CD4-positive, alpha-beta T cell (primary cell): ENCODE measurements at regions of chr18 and their contacts with region 1.

Region 1: DNA sequence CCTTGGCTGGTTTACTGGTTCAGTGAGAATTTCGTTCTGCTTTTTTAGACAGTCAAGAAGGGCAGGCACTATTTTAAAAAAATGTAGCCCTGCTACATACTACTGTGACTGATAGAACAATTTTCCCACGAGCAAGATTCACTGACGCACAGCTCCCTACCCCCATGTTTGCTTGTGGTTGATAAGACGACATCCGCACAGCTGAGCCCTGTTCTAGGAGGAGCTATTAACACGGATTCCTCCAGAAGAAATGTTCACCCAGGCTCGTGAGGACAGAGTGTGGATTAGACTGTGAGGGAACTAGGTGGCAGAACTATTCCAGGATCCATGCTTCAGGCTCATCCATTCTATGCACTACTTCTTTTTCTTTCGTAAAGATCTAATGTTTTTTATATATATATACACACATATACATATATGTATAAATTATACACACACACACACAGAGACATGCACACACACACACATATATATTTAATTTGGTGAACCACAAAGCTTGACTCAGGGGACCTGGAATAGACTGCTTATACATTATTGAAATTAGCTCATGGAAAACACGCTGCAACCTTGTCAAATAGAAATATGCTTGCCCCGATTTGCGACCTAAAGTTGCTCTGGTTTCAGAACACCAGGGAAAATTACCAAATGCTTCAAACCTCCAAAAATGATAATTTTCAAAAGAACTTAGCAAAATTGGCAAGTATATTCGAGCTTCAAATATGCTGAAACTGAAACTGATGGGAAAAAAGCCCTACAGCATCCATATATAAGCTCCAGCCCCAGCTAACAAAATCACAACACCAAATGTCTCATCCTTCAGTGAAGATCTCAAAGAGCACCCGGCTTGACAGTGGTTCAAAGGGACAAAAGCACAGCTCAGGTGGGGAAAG is 370.4 kb downstream of the SOCS6 start:
- DNase-seq: peak; percentile 35 to 89 (median 54)
- ATAC-seq: peak; percentile 95
- H3K4me3 ChIP-seq: no peak overlapping the region
- H3K4me3 Mint-ChIP-seq: peak overlapping the region; percentile 58
- H3K27ac ChIP-seq: peak overlapping the region; percentile 13 to 43
- H3K27ac Mint-ChIP-seq: peak overlapping the region; percentile 97
- H3K4me1 ChIP-seq: peaks cover 12% of the 10 kb centered on the region
- H3K4me1 Mint-ChIP-seq: peaks cover 59% of the 10 kb centered on the region
- H3K27me3 ChIP-seq: no peaks in the 10 kb centered on the region
- H3K27me3 Mint-ChIP-seq: no peaks in the 10 kb centered on the region
- CTCF ChIP-seq: no peak

Region 2: GRCh38 chr18:70491734-70492348 is 167.4 kb before region 1 on chr18:
- CTCF ChIA-PET with region 1: no interaction called
- POLR2A ChIA-PET with region 1: no interaction called
- intact Hi-C with region 1: loop called in 1 of 2 experiments (anchors 1 kb)
- DNase-seq: peak in 12 of 14 experiments; percentile 9 to 65 (median 38)
- ATAC-seq: peak; percentile 61
- H3K4me3 ChIP-seq: no peak overlapping the region
- H3K4me3 Mint-ChIP-seq: no peak overlapping the region
- H3K27ac ChIP-seq: no peak overlapping the region
- H3K27ac Mint-ChIP-seq: no peak overlapping the region
- H3K4me1 ChIP-seq: no peaks in the 10 kb centered on the region
- H3K4me1 Mint-ChIP-seq: peaks cover 17% of the 10 kb centered on the region
- H3K27me3 ChIP-seq: no peaks in the 10 kb centered on the region
- H3K27me3 Mint-ChIP-seq: no peaks in the 10 kb centered on the region
- CTCF ChIP-seq: peak; percentile 84

Region 3: GRCh38 chr18:70598406-70598805 is 60.9 kb before region 1 on chr18:
- CTCF ChIA-PET with region 1: interaction called, 3 read pairs
- POLR2A ChIA-PET with region 1: interaction called, 4 read pairs
- intact Hi-C with region 1: loop called in 1 of 2 experiments (anchors 2 kb)
- DNase-seq: no peak
- ATAC-seq: no peak
- H3K4me3 ChIP-seq: no peak overlapping the region
- H3K4me3 Mint-ChIP-seq: no peak overlapping the region
- H3K27ac ChIP-seq: no peak overlapping the region
- H3K27ac Mint-ChIP-seq: peak overlapping the region; percentile 85
- H3K4me1 ChIP-seq: peaks cover 8% of the 10 kb centered on the region
- H3K4me1 Mint-ChIP-seq: peaks cover 16% of the 10 kb centered on the region
- H3K27me3 ChIP-seq: no peaks in the 10 kb centered on the region
- H3K27me3 Mint-ChIP-seq: no peaks in the 10 kb centered on the region
- CTCF ChIP-seq: no peak

Region 4: GRCh38 chr18:70621710-70622109 is 37.6 kb before region 1 on chr18:
- CTCF ChIA-PET with region 1: no interaction called
- POLR2A ChIA-PET with region 1: interaction called, 30 read pairs
- intact Hi-C with region 1: loop called (anchors 5 kb)
- DNase-seq: peak in 12 of 14 experiments; percentile 9 to 60 (median 32)
- ATAC-seq: peak; percentile 86
- H3K4me3 ChIP-seq: peak overlapping the region; percentile 31
- H3K4me3 Mint-ChIP-seq: peak overlapping the region; percentile 85
- H3K27ac ChIP-seq: peak overlapping the region; percentile 47 to 66
- H3K27ac Mint-ChIP-seq: peak overlapping the region; percentile 95
- H3K4me1 ChIP-seq: peaks cover 32% of the 10 kb centered on the region
- H3K4me1 Mint-ChIP-seq: peaks cover 71% of the 10 kb centered on the region
- H3K27me3 ChIP-seq: no peaks in the 10 kb centered on the region
- H3K27me3 Mint-ChIP-seq: no peaks in the 10 kb centered on the region
- CTCF ChIP-seq: no peak

Region 5: GRCh38 chr18:70671889-70672565 is 12.7 kb after region 1 on chr18:
- CTCF ChIA-PET with region 1: interaction called, 3 read pairs
- POLR2A ChIA-PET with region 1: interaction called, 55 read pairs
- intact Hi-C with region 1: loop called in 1 of 2 experiments (anchors 1 kb)
- DNase-seq: peak in 13 of 14 experiments; percentile 28 to 61 (median 43)
- ATAC-seq: peak; percentile 57
- H3K4me3 ChIP-seq: no peak overlapping the region
- H3K4me3 Mint-ChIP-seq: peak overlapping the region; percentile 61
- H3K27ac ChIP-seq: peak overlapping the region; percentile 59 to 84
- H3K27ac Mint-ChIP-seq: peak overlapping the region; percentile 91
- H3K4me1 ChIP-seq: peaks cover 44% of the 10 kb centered on the region
- H3K4me1 Mint-ChIP-seq: peaks cover 62% of the 10 kb centered on the region
- H3K27me3 ChIP-seq: no peaks in the 10 kb centered on the region
- H3K27me3 Mint-ChIP-seq: no peaks in the 10 kb centered on the region
- CTCF ChIP-seq: no peak

Region 6: GRCh38 chr18:70683263-70683662 is 24.0 kb after region 1 on chr18:
- CTCF ChIA-PET with region 1: interaction called, 3 read pairs
- POLR2A ChIA-PET with region 1: interaction called, 3 read pairs
- intact Hi-C with region 1: loop called in 1 of 2 experiments (anchors 1 kb)
- DNase-seq: peak in 3 of 14 experiments; percentile 54 to 73 (median 71)
- ATAC-seq: peak; percentile 96
- H3K4me3 ChIP-seq: no peak overlapping the region
- H3K4me3 Mint-ChIP-seq: peak overlapping the region; percentile 8
- H3K27ac ChIP-seq: peak overlapping the region in 1 of 2 donors; percentile 32
- H3K27ac Mint-ChIP-seq: peak overlapping the region; percentile 91
- H3K4me1 ChIP-seq: no peaks in the 10 kb centered on the region
- H3K4me1 Mint-ChIP-seq: peaks cover 34% of the 10 kb centered on the region
- H3K27me3 ChIP-seq: no peaks in the 10 kb centered on the region
- H3K27me3 Mint-ChIP-seq: no peaks in the 10 kb centered on the region
- CTCF ChIP-seq: no peak

Region 7: GRCh38 chr18:70709144-70709543 is 49.9 kb after region 1 on chr18:
- CTCF ChIA-PET with region 1: no interaction called
- POLR2A ChIA-PET with region 1: no interaction called
- intact Hi-C with region 1: no loop called
- DNase-seq: no peak
- ATAC-seq: no peak
- H3K4me3 ChIP-seq: no peak overlapping the region
- H3K4me3 Mint-ChIP-seq: no peak overlapping the region
- H3K27ac ChIP-seq: no peak overlapping the region
- H3K27ac Mint-ChIP-seq: peak overlapping the region; percentile 53
- H3K4me1 ChIP-seq: no peaks in the 10 kb centered on the region
- H3K4me1 Mint-ChIP-seq: peaks cover 12% of the 10 kb centered on the region
- H3K27me3 ChIP-seq: no peaks in the 10 kb centered on the region
- H3K27me3 Mint-ChIP-seq: no peaks in the 10 kb centered on the region
- CTCF ChIP-seq: no peak

Region 8: DNA sequence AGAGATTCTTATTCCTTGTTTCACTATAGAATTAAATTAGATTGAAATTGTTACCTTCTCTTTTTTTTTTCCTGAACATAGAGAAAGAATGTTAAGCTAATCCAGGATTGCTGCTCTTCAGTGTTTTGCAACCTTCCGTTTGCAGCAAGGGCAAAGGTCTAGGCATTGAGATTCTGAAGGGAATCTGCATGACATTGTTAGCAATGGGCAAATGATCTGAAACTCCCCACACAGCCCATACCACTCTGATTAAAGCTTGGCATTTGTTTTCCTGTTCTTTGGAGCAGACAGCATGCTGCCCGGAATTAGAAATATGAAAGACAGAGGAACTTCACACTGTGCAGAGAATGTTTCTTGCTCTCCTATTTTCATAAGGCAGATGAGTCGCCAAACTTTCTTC is 181.4 kb after region 1 on chr18:
- CTCF ChIA-PET with region 1: no interaction called
- POLR2A ChIA-PET with region 1: no interaction called
- intact Hi-C with region 1: no loop called
- DNase-seq: no peak
- ATAC-seq: no peak
- H3K4me3 ChIP-seq: no peak overlapping the region
- H3K4me3 Mint-ChIP-seq: no peak overlapping the region
- H3K27ac ChIP-seq: no peak overlapping the region
- H3K27ac Mint-ChIP-seq: no peak overlapping the region
- H3K4me1 ChIP-seq: no peaks in the 10 kb centered on the region
- H3K4me1 Mint-ChIP-seq: no peaks in the 10 kb centered on the region
- H3K27me3 ChIP-seq: no peaks in the 10 kb centered on the region
- H3K27me3 Mint-ChIP-seq: no peaks in the 10 kb centered on the region
- CTCF ChIP-seq: no peak